H1 (cell line): ENCODE measurements at regions of chr4 and their contacts with region 1.

Region 1: DNA sequence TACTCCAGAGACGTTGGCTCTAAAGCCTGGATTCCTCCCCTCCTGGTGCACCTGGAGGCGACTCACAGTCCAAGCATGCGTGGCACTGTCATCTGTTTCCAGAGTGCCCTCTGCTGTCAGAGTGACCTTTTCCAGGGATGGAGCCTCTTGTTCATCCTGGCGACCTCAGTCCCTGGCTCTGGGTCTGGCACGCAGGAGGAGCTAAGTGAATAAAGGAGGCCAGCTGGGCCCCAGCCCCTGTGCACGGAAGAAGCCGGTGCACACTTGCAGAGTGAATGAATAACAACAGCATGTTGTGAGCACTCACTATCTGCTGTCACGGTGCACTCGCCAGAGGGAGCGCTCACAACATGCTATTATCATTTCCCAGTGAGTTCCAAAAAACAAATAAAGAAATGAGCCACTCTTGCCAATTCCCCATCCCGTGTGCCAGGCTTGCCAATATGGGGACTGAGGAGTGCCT is 27.8 kb upstream of the PSAPL1 start:
- DNase-seq: peak in 1 of 2 experiments; percentile 19
- H3K4me3 ChIP-seq: no peak overlapping the region
- H3K27ac ChIP-seq: no peak overlapping the region
- H3K4me1 ChIP-seq: peaks cover 0 to 14% (median 10%) of the 10 kb centered on the region in 4 experiments; a peak in 6 of 7 replicates
- H3K27me3 ChIP-seq: no peaks in the 10 kb centered on the region
- CTCF ChIP-seq: peak in 1 of 3 experiments; percentile 42; a peak in 1 of 4 replicates
- EP300 ChIP-seq: no peak
- POLR2A ChIP-seq: no peak
- RAD21 ChIP-seq: peak; percentile 29 to 53; a peak in 3 of 4 replicates

Region 2: GRCh38 chr4:7451434-7451789 is 11.1 kb before region 1 on chr4:
- CTCF ChIA-PET with region 1: interaction called, 10 read pairs
- POLR2A ChIA-PET with region 1: interaction called, 3 read pairs
- DNase-seq: no peak
- H3K4me3 ChIP-seq: no peak overlapping the region
- H3K27ac ChIP-seq: no peak overlapping the region
- H3K4me1 ChIP-seq: peaks cover 0 to 3% (median 0%) of the 10 kb centered on the region in 4 experiments; a peak in 1 of 7 replicates
- H3K27me3 ChIP-seq: no peaks in the 10 kb centered on the region; a peak in 1 of 7 replicates
- CTCF ChIP-seq: no peak
- EP300 ChIP-seq: no peak
- POLR2A ChIP-seq: no peak
- RAD21 ChIP-seq: no peak